Right ventricle myocardium superior (tissue), 1 donor: ENCODE measurements at regions of chr1 and their contacts with region 1.

Region 1: GRCh38 chr1:151934048-151934493 is 24.8 kb upstream of the THEM4 start:
- DNase-seq: no peak
- ATAC-seq: peak; percentile 94

Region 2: GRCh38 chr1:151995774-151996173 is 61.7 kb after region 1 on chr1:
- intact Hi-C with region 1: loop called (anchors 2 kb)
- DNase-seq: no peak
- ATAC-seq: no peak